ENCODE measurements at regions of chr6 and their contacts with region 1.

Region 1: GRCh38 chr6:35108309-35108885 is 32.7 kb downstream of the TCP11 start:
- DNase-seq: no peak
- CTCF ChIP-seq: no peak

Region 2: DNA sequence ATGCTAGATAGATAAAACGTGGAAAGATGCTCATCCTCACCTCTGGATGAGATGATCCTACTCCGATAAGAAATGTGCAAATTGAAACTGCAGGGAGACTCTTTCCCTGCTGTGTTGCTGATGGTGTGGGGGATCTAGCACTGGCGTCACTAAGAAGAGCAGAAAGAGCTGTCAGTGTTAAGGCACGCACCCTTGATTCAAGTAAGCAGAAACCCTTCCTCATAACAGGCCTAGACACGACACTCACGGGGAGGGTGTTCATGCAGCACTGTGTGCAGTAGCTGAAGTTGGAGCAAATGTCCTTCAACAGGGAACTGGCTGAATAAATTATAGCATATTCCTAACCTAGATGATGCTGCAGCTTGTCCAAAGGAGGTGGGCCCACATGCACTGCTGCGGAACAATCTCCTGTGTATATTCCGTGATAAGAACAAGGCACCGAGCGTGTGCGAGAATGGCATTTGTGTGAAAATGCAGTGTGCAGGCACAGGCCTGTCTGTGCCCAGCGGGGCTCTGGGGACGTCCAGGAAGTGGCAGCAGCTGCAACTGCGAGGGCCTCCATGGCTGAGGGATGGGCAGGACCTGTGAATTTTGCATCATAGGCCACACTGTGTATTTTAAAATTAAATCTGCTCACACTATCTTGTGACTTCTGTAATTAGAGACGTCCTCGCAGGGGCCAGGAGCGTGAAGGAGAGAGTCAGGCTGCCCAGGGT is 31.2 kb before region 1 on chr6:
- CTCF ChIA-PET with region 1: no interaction called
- POLR2A ChIA-PET with region 1: no interaction called
- DNase-seq: no peak
- CTCF ChIP-seq: no peak

Region 3: DNA sequence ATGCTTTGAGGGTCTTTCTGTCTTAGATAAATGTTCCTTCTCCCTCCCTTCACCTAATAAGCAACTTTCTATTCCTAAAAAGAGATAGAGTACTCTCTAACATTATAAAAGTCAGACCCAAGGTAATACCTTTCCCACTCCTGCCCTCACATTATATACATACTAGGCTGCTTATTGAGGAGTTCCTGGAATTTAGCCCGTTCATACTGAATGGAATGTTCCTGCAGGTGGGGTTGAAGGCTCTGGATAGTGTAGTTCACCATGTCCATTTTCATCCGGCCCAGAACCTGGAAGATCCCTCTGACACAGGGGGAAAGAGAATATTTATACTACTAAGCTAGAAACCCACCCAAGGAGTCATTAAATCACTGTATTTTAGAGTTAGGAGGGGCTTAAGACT is 12.3 kb after region 1 on chr6:
- CTCF ChIA-PET with region 1: interaction called, 11 read pairs
- POLR2A ChIA-PET with region 1: no interaction called
- DNase-seq: no peak
- CTCF ChIP-seq: no peak

Measured in GM10248 (cell line).